ENCODE measurements at regions of chr1 and their contacts with region 1.

Region 1: DNA sequence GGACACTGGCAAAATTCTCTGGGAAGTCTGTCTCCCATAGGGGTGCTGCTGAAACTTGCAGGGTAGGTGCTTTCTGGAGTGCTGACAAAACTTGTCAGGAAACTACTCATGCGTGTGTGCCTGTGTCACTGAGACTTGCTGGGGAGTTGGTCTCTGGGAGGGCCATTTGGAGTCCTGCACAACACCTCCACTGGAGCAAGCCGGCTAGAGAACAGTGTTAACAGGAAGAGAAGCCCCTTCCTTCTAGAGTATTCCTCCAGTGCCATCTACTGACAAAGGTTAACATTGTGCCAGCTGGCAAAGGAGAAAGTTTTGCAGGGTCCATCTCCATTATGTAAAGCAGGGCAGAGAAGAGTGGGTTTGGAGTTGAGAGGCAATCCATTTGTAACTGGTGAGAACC is 30.0 kb downstream of the ZMYM4 start:
- DNase-seq: no peak
- ATAC-seq: peak; percentile 73

Region 2: DNA sequence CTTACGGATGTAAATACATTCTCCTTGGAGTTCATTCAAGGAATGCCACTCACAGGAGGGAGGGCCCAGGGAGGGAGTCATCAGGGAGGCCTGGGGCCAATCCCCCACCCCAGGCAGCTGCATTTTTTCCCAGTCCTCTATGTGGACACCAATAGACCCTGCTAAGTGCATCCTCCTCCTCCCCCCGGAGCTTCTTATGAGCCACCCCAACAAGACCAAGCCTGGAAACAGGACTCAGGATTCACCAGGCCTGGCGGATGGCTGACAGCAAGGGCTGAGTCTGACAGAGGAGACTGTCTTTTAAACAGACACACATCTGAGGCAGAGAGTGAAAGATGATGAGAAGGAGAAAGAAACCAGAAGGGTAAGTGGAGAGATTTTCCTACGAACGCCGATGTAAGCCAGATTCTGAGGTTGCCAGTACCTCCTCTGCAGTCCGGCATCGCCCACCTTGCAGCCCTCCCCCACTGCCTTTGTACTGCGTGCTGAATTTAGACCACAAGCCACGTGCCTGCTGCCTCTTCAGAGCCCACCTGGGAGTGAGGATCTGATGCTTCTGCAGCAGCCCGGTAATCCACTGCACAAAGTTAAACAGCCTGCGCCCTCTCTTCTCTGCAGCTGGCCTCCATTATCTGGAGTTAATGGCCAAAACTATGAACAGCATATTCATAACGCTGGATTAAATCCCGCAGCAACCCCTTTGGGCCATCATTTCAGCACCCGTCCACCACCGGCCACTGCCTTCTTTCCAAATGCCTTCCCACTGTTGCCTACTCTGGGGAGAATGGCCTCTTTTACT is 87.9 kb before region 1 on chr1:
- intact Hi-C with region 1: loop called (anchors 10 kb)
- DNase-seq: no peak
- ATAC-seq: peak; percentile 59

Region 3: GRCh38 chr1:35316264-35316663 is 17.8 kb after region 1 on chr1:
- intact Hi-C with region 1: no loop called
- DNase-seq: no peak
- ATAC-seq: no peak

Region 4: DNA sequence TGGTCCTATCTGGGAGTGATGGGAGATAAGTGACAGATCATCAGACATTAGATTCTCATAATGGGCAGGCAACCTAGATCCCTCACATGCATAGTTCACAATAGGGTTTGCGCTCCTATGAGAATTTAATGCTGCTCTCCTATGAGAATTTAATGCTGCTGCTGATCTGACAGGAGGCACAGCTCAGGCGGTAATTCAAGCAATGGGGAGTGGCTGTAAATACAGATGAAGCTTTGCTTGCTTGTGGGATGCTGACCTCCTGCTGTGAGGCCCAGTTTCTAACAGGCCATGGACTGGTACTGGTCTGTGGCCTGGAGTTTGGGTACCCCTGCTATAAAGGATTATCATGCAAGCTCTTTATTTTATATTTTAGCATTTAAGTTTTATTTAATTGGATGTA is 42.1 kb after region 1 on chr1:
- intact Hi-C with region 1: no loop called
- DNase-seq: no peak
- ATAC-seq: no peak

Region 5: GRCh38 chr1:35361638-35362037 is 63.2 kb after region 1 on chr1:
- intact Hi-C with region 1: no loop called
- DNase-seq: no peak
- ATAC-seq: no peak

Region 6: DNA sequence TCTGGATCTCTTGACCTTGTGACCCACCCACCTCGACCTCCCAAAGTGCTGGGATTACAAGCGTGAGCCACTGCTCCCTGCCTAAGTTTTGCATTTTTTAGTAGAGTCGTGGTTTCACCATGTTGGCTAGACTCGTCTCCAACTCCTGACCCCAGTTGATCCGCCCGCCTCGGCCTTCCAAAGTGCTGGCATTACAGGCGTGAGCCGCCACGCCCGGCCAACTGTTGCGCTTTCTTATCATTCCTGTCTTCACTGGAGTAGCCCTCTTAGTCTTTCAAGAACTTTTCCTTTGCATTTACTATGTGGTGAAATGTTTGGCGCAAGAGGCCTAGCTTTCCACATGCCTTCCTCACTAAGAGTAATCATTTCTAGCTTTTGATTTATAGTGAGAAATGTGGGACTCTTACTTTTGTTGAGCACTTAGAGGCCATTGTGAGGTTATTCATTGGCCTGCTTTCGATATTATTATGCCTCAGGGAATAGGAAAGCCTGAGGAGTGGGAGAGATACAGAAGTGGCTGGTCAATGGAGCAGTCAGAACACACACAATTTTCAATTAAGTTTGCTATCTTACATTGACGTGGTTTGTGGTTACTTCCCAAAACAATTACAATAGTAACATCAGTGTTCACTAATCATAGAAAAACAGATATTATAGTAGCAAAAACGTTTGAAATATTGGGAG is 81.0 kb after region 1 on chr1:
- intact Hi-C with region 1: no loop called
- DNase-seq: no peak
- ATAC-seq: no peak